ENCODE measurements at regions of chr19 and their contacts with region 1.

Region 1: GRCh38 chr19:12722566-12723380 is 959 bp downstream of the TNPO2 start:
- DNase-seq: peak; percentile 97
- ATAC-seq: peak; percentile 87
- H3K4me3 ChIP-seq: peak overlapping the region; percentile 60 to 83 (median 77)
- H3K4me3 Mint-ChIP-seq: peak overlapping the region; percentile 95
- H3K27ac ChIP-seq: peak overlapping the region; percentile 17 to 69
- H3K27ac Mint-ChIP-seq: peak overlapping the region; percentile 97
- H3K4me1 ChIP-seq: peaks cover 29 to 39% of the 10 kb centered on the region in 2 donors
- H3K4me1 Mint-ChIP-seq: peaks cover 39% of the 10 kb centered on the region
- H3K27me3 ChIP-seq: no peaks in the 10 kb centered on the region
- H3K27me3 Mint-ChIP-seq: no peaks in the 10 kb centered on the region
- CTCF ChIP-seq: no peak

Region 2: DNA sequence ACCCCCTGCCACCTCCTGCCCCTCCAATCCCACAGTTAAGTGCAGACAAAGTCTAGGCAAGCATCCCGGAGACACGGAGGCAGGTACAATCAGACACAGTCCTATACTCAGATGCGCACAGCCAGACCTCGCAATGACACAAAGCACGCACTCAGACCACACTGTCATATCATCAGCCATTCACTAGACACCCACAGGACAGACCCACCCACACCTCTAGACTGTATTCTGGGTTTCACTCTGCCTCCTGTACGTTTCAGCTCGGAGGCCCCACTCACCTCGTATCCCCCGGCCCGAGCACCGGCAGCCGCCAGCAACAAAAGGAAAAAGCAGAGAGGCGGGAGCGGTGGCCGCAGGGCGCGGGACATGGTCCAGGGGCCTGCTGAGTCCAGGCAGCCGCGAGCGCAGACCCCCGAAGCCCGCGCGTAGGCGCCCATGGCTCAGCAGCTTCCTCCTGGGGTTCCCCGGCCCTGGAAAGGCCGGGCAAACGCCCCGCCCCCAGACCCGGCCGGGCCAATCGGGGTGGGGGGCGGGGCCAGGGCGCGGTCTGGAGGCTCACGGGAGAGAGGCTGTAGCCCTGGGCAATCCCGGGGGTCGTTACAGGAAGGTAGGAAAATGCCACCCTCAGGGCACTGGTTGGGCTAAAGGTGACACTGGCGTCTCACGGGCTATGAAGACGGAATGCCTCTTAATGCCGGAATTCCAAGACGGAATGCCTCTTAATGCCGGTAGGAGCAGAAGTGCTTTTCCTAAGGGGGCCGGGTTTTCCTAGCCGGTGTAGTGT is 56.3 kb before region 1 on chr19 and contains the starts of genes MAN2B1 and WDR83:
- CTCF ChIA-PET with region 1: no interaction called
- POLR2A ChIA-PET with region 1: no interaction called
- intact Hi-C with region 1: loop called (anchors 5 kb)
- DNase-seq: peak; percentile 91
- ATAC-seq: peak; percentile 71
- H3K4me3 ChIP-seq: peak within 1 kb of the TSS; percentile 84 to 99 (median 94)
- H3K4me3 Mint-ChIP-seq: peak within 1 kb of the TSS; percentile 98
- H3K27ac ChIP-seq: peak within 1 kb of the TSS; percentile 95 to 99
- H3K27ac Mint-ChIP-seq: peak within 1 kb of the TSS; percentile 97
- H3K4me1 ChIP-seq: peaks cover 37 to 60% of the 10 kb centered on the region in 2 donors
- H3K4me1 Mint-ChIP-seq: peaks cover 67% of the 10 kb centered on the region
- H3K27me3 ChIP-seq: no peaks in the 10 kb centered on the region
- H3K27me3 Mint-ChIP-seq: no peaks in the 10 kb centered on the region
- CTCF ChIP-seq: no peak
- total RNA-seq, gene MAN2B1: 252 and 256 TPM in 2 replicates
- total RNA-seq, gene WDR83: 24.6 and 25.8 TPM in 2 replicates

Region 3: DNA sequence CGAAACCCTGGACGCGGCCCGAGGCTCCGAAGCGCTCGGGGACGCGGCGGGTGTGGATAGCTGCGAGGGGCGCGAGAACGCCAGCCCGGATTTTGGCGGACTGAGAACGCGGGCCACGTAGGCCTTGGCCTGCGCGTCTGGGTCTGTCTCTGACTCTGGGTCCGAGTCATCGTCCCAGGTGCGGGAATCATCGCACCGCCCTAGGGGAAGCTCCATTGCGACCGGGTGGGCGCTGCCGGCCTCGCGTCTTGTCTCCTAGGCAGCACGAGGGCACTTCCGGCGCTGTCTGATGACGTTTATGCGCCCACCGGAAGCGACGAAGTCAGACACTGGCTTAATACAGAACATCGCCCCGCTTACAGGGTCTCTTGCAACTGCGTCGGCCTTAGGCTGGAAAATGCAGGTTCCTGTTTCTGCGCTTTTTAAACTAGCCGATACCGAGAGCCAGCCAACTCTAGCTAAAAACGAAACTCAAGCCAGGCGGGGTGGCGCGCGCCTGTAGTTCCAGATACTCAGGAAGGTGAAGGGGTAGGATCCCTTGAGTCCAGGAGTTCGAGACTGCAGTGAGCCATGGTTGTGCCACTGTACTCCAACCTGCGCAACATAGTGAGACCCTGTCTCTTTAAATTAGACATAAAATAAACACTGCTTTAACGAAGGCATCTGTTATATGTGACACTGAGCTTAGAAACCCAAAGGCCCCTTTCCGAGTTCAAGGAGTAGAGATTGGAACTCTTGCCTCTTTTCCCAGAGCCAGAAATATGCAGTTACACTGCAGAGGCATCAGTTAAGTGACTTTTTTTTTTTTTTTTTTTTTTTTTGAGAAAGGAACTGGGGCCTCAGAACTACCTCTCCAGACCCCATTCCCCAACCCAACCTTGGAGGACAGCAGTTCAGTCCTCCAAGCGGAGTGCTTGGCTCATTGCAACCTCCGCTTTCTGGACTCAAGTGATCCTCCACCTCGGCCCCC is 26.1 kb before region 1 on chr19 and contains the start of gene FBXW9:
- CTCF ChIA-PET with region 1: interaction called, 4 read pairs
- POLR2A ChIA-PET with region 1: interaction called, 8 read pairs
- intact Hi-C with region 1: loop called (anchors 1 kb)
- DNase-seq: peak; percentile 98
- ATAC-seq: peak; percentile 87
- H3K4me3 ChIP-seq: peak within 1 kb of the TSS; percentile 64 to 88 (median 82)
- H3K4me3 Mint-ChIP-seq: peak within 1 kb of the TSS; percentile 94
- H3K27ac ChIP-seq: peak within 1 kb of the TSS; percentile 85 to 93
- H3K27ac Mint-ChIP-seq: peak within 1 kb of the TSS; percentile 98
- H3K4me1 ChIP-seq: peaks cover 13 to 17% of the 10 kb centered on the region in 2 donors
- H3K4me1 Mint-ChIP-seq: peaks cover 10% of the 10 kb centered on the region
- H3K27me3 ChIP-seq: no peaks in the 10 kb centered on the region
- H3K27me3 Mint-ChIP-seq: no peaks in the 10 kb centered on the region
- CTCF ChIP-seq: no peak
- total RNA-seq, gene FBXW9: 4.7 and 5.2 TPM in 2 replicates

Region 4: GRCh38 chr19:12766051-12766521 is 43.3 kb after region 1 on chr19:
- CTCF ChIA-PET with region 1: interaction called, 15 read pairs
- POLR2A ChIA-PET with region 1: no interaction called
- intact Hi-C with region 1: no loop called
- DNase-seq: peak; percentile 87
- ATAC-seq: peak; percentile 65
- H3K4me3 ChIP-seq: no peak overlapping the region
- H3K4me3 Mint-ChIP-seq: no peak overlapping the region
- H3K27ac ChIP-seq: no peak overlapping the region
- H3K27ac Mint-ChIP-seq: no peak overlapping the region
- H3K4me1 ChIP-seq: peaks cover 6 to 8% of the 10 kb centered on the region in 2 donors
- H3K4me1 Mint-ChIP-seq: peaks cover 10% of the 10 kb centered on the region
- H3K27me3 ChIP-seq: no peaks in the 10 kb centered on the region
- H3K27me3 Mint-ChIP-seq: no peaks in the 10 kb centered on the region
- CTCF ChIP-seq: peak; percentile 90

Region 5: DNA sequence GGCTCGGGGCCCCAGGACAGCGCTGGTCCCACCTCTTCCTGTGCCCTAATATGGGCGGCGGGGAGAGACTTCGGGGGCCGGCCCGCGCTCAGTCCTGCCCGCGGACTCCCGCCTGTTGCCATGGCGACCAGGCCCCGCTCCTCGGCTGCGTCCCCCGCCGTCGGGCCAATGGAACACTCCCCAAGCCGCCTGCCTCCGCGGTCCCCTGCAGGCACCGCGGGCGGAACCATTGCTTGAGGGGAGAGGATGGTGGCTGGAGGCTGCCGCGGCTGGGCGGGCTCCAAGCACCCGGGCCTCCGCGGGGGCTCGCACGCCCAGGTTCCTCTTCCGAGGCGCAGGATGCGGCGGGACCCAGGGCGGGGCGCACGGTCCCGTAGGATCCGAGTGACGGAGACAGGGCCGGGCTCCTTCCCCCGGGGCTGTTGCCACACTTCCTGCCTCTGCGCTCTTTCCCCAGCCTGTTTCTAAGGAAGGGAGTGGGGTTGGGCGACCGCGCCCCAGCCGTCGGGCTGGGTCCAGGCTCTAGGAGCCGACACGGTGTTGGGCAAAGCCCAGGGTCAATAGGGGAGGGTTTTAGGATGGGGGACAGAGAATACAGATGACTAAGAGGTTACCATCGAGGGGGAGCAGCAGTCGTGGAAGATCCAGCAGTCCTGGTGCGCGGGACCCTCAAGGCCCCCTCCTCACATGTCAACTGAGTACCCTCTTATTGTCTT is 67.3 kb after region 1 on chr19:
- CTCF ChIA-PET with region 1: interaction called, 3 read pairs
- POLR2A ChIA-PET with region 1: interaction called, 30 read pairs
- intact Hi-C with region 1: no loop called
- DNase-seq: peak; percentile 99
- ATAC-seq: peak; percentile 46
- H3K4me3 ChIP-seq: peak overlapping the region; percentile 94 to 99 (median 97)
- H3K4me3 Mint-ChIP-seq: peak overlapping the region; percentile 97
- H3K27ac ChIP-seq: peak overlapping the region; percentile 95 to 97
- H3K27ac Mint-ChIP-seq: peak overlapping the region; percentile 99
- H3K4me1 ChIP-seq: peaks cover 52 to 64% of the 10 kb centered on the region in 2 donors
- H3K4me1 Mint-ChIP-seq: peaks cover 41% of the 10 kb centered on the region
- H3K27me3 ChIP-seq: no peaks in the 10 kb centered on the region
- H3K27me3 Mint-ChIP-seq: no peaks in the 10 kb centered on the region
- CTCF ChIP-seq: no peak

Measured in B cell (primary cell).